ENCODE measurements at regions of chr18 and their contacts with region 1.

Region 1: GRCh38 chr18:45324495-45325113 is 290.7 kb upstream of the SLC14A2 start:
- DNase-seq: peak; percentile 77
- ATAC-seq: peak; percentile 90

Region 2: GRCh38 chr18:44927127-44927849 is 397.3 kb before region 1 on chr18:
- intact Hi-C with region 1: loop called (anchors 10 kb)
- DNase-seq: no peak
- ATAC-seq: no peak

Region 3: GRCh38 chr18:45260125-45260524 is 64.5 kb before region 1 on chr18:
- intact Hi-C with region 1: no loop called
- DNase-seq: no peak
- ATAC-seq: no peak

Measured in sciatic nerve (tissue), 2 donors.